BJ (cell line): ENCODE measurements at regions of chr15 and their contacts with region 1.

Region 1: DNA sequence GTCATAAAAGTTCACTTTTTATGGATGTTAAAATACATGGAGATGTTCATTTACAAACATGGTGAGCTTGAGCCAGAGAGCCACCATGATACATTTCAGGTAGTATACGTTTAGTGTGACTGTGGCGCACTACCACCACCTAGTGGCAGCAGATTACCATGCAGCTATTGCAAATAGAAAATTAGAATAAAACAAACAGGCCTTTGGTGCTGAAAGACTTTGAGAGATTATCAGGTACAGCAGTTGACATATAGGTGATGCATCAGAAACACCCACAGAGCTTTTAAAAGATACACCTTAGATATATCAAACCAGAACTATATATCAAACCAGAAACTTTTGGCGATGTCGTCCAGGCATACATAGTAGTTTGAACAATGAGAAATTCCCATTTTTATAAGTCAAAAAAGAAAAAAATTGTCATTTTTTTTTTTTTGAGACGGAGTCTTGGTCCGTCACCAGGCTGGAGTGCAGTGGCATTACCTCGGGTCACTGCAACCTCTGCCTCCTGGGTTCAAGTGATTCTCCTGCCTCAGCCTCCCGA is 42.0 kb upstream of the ICE2 start:
- DNase-seq: no peak
- H3K4me3 ChIP-seq: no peak overlapping the region
- H3K27me3 ChIP-seq: no peaks in the 10 kb centered on the region
- CTCF ChIP-seq: peak; percentile 88

Region 2: DNA sequence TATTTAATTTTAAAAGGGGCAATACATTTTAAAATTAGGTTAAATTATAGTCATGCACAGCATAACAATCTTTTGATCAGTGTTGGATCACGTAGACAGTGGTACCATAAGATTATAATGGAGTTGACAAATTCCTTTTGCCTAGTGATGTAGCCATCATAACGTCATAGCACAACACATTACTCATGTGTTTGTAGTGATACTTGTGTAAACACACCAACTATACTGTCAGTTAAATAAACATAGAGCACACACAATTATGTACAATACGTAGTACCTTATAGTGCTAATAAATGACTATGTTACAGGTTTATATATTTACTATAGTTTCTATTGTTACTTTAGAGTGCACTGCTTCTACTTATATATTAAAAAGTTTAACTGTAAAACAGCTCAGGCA is 485.6 kb before region 1 on chr15:
- CTCF ChIA-PET with region 1: no interaction called
- POLR2A ChIA-PET with region 1: no interaction called
- DNase-seq: no peak
- H3K4me3 ChIP-seq: no peak overlapping the region
- H3K27me3 ChIP-seq: 0 out of 2 replicates have a peak, but pooled peaks cover 2% of the 10 kb centered on the region
- CTCF ChIP-seq: no peak

Region 3: DNA sequence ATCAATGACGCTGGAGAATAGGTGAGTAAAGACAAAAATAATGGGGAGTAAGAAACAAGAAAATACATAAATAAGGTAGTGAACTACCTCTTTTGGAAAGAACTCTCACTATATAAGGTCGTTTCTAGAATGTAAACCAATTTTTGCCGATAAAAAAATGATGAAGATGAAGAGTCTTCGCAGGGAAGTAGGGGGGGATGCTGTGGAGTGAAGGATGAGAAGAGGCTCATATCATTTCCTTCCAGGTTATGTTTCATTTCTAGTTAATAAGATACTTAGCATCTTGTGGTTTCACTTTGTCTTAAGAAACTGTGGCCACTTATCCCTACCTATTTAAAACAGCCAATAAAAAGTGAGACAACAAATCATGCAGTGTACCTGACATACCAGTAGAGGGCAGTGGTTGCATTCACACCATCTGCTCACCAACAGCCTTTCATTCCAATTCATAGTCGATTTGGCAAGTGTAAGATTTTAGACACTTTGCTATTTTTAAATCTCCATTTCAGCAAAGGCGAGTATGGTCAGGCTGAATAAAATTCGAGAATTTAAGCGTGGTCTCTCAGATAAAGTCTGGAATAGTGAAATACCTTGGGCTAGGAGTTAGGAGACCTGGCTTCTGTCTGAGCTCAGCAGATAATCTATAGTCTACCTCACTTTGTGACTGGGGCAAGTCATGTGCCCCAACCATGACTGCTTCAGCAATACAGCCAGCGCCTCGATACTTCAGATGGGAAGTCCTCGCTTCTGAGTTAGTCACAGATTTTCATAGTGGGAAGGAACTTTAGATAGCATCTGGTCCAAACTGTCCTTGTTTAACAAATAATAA is 13.1 kb before region 1 on chr15:
- CTCF ChIA-PET with region 1: interaction called, 104 read pairs
- POLR2A ChIA-PET with region 1: no interaction called
- DNase-seq: peak; percentile 22
- H3K4me3 ChIP-seq: no peak overlapping the region
- H3K27me3 ChIP-seq: no peaks in the 10 kb centered on the region
- CTCF ChIP-seq: peak; percentile 91

Region 4: GRCh38 chr15:60531801-60532200 is 10.9 kb after region 1 on chr15:
- CTCF ChIA-PET with region 1: interaction called, 20 read pairs
- POLR2A ChIA-PET with region 1: interaction called, 3 read pairs
- DNase-seq: no peak
- H3K4me3 ChIP-seq: no peak overlapping the region
- H3K27me3 ChIP-seq: no peaks in the 10 kb centered on the region
- CTCF ChIP-seq: no peak